Sciatic nerve (tissue), 2 donors: ENCODE measurements at regions of chr12 and their contacts with region 1.

Region 1: DNA sequence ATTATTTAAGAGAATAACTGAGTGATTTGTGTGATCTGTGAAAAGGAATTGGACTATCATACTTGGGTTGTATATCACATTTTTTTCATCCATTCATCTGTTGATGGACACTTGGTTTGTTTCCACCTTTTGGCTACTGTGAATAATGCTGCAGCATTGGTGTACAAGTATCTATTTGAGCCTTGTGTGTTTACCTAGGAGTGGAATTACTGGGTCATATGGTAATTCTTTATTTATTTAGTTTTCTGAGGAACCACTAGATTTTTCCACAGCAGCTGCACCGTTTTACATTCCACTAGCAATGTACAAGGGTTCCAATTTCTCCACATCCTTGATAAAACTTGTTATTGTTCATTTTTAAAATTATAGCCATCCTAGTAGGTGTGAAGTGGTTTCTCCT is 56.1 kb downstream of the APAF1 start:
- DNase-seq: no peak
- ATAC-seq: no peak

Region 2: GRCh38 chr12:98669751-98670150 is 31.4 kb before region 1 on chr12:
- intact Hi-C with region 1: loop called (anchors 2 kb)
- DNase-seq: no peak
- ATAC-seq: no peak